Right cardiac atrium (tissue), 5 donors: ENCODE measurements at regions of chr19 and their contacts with region 1.

Region 1: DNA sequence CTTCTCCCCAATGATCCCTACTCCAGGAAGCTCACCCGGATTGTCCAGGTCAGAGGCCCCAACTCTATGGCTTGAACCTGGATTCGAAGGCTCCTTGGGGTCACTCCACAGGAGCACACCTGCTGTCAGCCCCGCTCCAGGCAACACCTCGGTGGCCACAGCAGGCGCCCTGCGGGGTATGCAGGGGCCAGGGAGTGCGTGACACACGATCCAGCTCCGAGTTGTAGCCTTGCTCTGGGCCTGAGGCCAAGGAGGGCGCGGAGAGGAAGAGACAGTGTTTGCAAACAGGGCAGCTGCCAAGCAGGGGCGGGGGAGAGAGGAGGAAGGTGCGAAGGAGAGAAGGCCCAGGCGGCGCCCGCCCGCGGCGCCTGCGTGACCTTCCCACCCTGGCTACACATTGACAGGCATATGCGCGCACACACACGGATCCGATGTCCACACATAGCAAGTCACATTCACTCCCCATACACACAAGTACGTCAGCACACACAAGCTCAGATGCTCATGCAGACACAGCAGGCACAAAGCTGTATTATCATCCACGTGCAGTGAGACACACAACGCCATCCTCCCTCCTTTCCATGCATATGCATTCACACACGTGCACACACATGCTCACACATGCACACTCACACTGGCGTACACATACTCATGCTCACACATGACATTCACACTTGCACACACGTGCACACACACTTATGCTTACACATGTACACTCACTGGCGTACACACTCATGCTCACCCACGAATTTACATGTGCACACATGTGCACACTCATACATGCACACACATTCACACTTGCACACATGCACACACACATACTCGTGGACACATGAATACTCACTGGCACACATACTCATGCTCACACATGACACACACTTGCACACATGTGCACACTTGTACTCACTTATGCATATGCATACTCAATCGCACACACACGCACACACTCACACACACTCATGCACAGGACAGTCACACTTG is 10.4 kb downstream of the SBK2 start:
- DNase-seq: peak; percentile 87 to 95 (median 94)
- ATAC-seq: peak; percentile 82 to 88
- H3K4me3 ChIP-seq: no peak overlapping the region
- H3K27ac ChIP-seq: peak overlapping the region; percentile 28
- H3K4me1 ChIP-seq: peaks cover 11% of the 10 kb centered on the region
- H3K27me3 ChIP-seq: no peaks in the 10 kb centered on the region

Region 2: DNA sequence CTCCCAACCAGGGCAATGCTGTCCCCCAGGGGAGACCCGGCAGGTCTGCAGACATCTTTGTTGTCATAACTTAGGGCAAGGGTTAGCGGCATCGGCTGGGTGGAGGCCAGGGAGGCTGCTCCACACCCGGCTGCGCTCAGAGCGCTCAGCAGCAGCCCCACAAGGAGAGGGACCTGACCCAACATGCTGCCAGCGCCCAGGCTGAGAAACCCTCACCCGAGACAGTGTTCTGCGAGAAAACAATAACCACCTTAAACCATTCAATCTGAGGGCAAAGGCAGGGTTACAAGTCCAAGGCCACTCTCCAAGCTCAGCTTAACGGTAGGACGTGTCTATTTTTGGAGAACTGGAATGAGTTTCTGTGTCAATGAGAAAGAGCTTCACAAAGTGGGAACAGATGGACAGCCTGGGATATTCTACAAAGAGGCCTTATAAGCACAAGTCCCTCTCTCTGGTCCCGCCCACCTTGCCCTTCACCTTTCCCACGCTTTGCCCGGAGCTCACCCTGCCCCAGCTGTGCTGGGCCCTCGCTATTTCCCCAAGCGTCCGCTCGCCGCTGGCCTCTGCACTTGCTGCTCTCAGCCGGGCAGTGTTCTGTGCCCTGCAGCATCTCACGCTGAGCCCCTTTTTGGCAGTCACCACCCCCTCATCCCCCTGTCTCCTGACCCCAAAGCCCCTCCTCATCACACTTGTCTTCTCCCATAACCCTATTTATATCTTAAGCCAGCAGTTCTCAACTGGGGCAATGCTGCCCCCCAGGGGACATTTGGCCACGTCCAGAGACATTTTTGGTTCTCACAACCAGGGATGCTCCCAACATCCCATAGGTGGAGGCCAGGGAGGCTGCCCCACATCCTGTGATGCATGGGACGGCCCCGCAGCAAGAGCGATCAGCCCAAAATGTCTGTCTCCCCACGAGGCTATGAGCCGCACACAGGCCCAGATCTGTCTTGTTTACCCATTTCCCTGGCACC is 426.7 kb before region 1 on chr19:
- intact Hi-C with region 1: no loop called
- DNase-seq: peak in 1 of 3 donors; percentile 68
- ATAC-seq: no peak
- H3K4me3 ChIP-seq: no peak overlapping the region
- H3K27ac ChIP-seq: peak overlapping the region; percentile 31
- H3K4me1 ChIP-seq: no peaks in the 10 kb centered on the region
- H3K27me3 ChIP-seq: no peaks in the 10 kb centered on the region

Region 3: DNA sequence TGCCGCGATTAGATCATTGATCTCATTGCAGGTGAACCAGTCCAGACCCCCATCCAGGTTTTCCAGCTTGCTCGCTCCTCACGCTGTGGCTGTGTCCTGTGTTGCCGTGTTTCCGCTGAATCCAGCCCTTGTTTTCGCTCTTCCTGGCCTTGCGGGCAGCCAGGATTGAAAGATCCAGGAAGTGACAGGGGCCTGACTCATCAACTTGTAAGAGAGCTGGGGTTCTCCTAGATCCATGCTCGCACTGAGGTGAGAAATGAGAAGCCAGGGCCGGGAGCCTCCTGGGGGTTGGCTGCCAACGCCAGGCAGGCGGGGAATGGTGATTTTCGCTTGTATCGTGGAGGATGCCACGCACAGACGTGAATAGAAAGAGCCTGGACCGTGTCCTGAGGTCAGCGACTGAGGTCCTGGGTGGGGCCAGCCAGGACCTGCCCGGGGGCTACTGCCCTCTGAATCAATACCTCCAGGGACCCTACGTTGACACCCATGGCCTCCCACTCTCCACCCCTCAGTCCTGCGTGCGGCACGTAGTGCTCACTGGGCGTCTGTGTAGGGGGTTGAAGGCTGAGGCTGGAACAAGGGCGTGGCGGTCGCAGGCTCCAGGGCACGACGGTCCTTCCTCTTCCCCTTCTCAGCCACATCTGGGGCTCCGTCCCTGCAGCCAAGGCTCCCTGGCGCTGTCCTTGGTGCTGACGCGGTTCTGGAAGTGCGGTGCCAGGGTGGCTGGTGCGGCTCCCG is 309.9 kb before region 1 on chr19:
- intact Hi-C with region 1: no loop called
- DNase-seq: peak; percentile 85 to 93 (median 92)
- ATAC-seq: peak; percentile 93 to 94
- H3K4me3 ChIP-seq: peak overlapping the region; percentile 26
- H3K27ac ChIP-seq: peak overlapping the region; percentile 35
- H3K4me1 ChIP-seq: peaks cover 7% of the 10 kb centered on the region
- H3K27me3 ChIP-seq: no peaks in the 10 kb centered on the region

Region 4: DNA sequence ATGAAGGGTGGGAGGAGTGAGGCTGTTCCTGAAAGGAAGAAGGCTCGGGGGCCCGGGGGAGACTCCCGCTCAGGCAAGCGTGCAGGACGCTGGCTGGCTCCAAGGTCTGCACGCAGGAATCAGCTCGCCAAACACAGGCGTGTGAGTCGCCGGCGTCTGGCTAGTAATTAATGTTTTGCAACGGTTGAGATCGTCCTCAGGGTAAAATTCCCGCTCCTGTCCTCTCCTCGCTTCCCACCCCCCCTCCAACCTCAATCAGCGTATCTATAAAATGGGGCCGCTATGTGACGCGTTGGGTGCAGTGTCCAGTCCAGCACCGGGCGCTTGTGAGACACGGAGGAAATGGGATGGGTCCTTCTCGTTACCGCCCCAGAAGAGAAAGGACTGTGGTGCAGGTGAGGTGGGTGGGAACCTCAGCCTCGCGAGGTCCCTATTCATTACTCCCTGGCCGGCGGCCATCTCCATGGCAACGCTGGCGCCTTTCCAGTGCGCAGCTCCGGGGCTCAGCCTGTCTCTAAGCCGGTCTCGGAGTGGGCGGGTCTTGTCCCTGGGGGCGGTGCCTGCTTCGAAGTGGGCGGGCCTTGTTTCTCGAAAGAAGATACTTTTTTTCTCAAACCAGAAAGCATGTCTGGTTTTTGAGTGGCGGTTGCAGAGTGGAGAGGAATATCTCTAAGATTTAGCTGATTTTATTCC is 60.6 kb after region 1 on chr19:
- intact Hi-C with region 1: loop called in 1 of 4 experiments (anchors 5 kb)
- DNase-seq: peak; percentile 95 to 99 (median 98)
- ATAC-seq: peak; percentile 89 to 93
- H3K4me3 ChIP-seq: peak overlapping the region; percentile 34
- H3K27ac ChIP-seq: peak overlapping the region; percentile 66
- H3K4me1 ChIP-seq: peaks cover 3% of the 10 kb centered on the region
- H3K27me3 ChIP-seq: no peaks in the 10 kb centered on the region